Activated CD4-positive, alpha-beta memory T cell treated with anti-CD3 and anti-CD28 coated beads for 36 hours (primary cell): ENCODE measurements at regions of chr14 and their contacts with region 1.

Region 1: GRCh38 chr14:65003394-65003793 is 16.7 kb downstream of the FNTB start:
- DNase-seq: no peak
- H3K4me3 Mint-ChIP-seq: no peak overlapping the region
- H3K27ac Mint-ChIP-seq: no peak overlapping the region
- H3K4me1 Mint-ChIP-seq: peaks cover 46% of the 10 kb centered on the region
- H3K27me3 Mint-ChIP-seq: no peaks in the 10 kb centered on the region

Region 2: GRCh38 chr14:65019944-65020566 is 16.7 kb after region 1 on chr14:
- CTCF ChIA-PET with region 1: interaction called, 16 read pairs
- POLR2A ChIA-PET with region 1: no interaction called
- intact Hi-C with region 1: no loop called
- DNase-seq: no peak
- H3K4me3 Mint-ChIP-seq: no peak overlapping the region
- H3K27ac Mint-ChIP-seq: no peak overlapping the region
- H3K4me1 Mint-ChIP-seq: no peaks in the 10 kb centered on the region
- H3K27me3 Mint-ChIP-seq: no peaks in the 10 kb centered on the region